ENCODE measurements at regions of chr2 and their contacts with region 1.

Region 1: DNA sequence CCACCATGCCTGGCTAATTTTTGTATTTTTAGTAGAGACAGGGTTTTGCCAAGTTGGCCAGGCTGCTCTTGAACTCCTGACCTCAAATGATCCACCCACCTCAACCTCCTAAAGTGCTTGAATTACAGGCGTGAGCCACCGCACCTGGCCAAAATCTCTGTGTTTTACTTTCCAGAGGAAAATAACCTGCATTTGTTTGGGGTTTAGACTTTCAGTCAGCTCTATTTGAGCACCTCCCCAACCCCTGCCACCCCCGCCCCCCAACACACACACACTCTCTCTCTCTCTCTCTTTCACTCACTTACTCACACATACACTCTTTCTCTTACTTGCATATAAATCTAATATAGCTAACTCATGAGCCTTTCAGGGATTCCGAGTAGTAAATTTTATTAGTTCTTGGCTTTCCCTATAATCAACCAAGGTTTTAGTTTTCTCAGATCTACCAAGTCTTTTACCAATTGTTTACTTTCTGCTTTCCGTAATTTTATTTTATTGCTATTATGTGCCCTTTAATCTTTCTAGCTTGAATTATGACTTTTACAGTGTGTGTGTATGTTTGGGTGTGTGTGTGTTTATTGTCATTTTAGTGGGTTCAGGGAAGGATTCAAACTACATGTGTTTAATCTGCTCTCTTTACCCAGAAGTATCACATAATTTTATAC is 24.5 kb downstream of the MFSD6 start:
- DNase-seq: no peak
- H3K4me3 Mint-ChIP-seq: no peak overlapping the region
- H3K27ac Mint-ChIP-seq: peak overlapping the region; percentile 1
- H3K4me1 Mint-ChIP-seq: peaks cover 46% of the 10 kb centered on the region
- H3K27me3 Mint-ChIP-seq: no peaks in the 10 kb centered on the region

Region 2: DNA sequence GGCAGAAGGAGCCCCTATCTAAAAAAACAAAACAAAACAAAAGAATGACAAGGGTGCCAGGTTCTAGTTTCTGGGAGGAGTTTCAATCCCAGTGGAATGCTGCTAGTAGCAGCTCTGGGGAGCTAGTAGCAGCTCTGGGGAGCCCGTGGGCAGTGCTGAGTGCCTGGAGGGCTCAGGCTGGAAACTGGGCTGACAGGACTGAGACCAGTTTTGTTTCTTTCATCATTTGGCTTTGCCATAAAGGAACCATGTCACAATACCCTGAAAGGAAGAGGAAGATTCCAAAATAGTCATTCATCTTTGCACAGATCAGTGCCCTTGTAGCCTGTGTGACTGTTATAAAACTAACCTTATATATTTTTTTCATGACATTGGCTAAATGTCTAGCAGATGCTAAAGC is 14.0 kb before region 1 on chr2:
- intact Hi-C with region 1: loop called (anchors 2 kb)
- DNase-seq: no peak
- H3K4me3 Mint-ChIP-seq: no peak overlapping the region
- H3K27ac Mint-ChIP-seq: no peak overlapping the region
- H3K4me1 Mint-ChIP-seq: peaks cover 38% of the 10 kb centered on the region
- H3K27me3 Mint-ChIP-seq: no peaks in the 10 kb centered on the region

Region 3: GRCh38 chr2:190451561-190452176 is 19.0 kb after region 1 on chr2:
- intact Hi-C with region 1: loop called (anchors 2 kb)
- DNase-seq: no peak
- H3K4me3 Mint-ChIP-seq: no peak overlapping the region
- H3K27ac Mint-ChIP-seq: no peak overlapping the region
- H3K4me1 Mint-ChIP-seq: peaks cover 21% of the 10 kb centered on the region
- H3K27me3 Mint-ChIP-seq: no peaks in the 10 kb centered on the region

Region 4: GRCh38 chr2:190468814-190469569 is 36.3 kb after region 1 on chr2:
- intact Hi-C with region 1: no loop called
- DNase-seq: no peak
- H3K4me3 Mint-ChIP-seq: no peak overlapping the region
- H3K27ac Mint-ChIP-seq: no peak overlapping the region
- H3K4me1 Mint-ChIP-seq: peaks cover 34% of the 10 kb centered on the region
- H3K27me3 Mint-ChIP-seq: no peaks in the 10 kb centered on the region

Measured in activated T-helper 2 cell treated with anti-CD3 and anti-CD28 coated beads, Interferon-gamma antibody, Interleukin-2, Interleukin-4, amounts not matched to agents 10 μg/mL and 5 μg/mL and 100 μg/mL, durations not matched to agents 14 hours and 24 hours and 36 hours (primary cell).